ENCODE measurements at regions of chr3 and their contacts with region 1.

Region 1: DNA sequence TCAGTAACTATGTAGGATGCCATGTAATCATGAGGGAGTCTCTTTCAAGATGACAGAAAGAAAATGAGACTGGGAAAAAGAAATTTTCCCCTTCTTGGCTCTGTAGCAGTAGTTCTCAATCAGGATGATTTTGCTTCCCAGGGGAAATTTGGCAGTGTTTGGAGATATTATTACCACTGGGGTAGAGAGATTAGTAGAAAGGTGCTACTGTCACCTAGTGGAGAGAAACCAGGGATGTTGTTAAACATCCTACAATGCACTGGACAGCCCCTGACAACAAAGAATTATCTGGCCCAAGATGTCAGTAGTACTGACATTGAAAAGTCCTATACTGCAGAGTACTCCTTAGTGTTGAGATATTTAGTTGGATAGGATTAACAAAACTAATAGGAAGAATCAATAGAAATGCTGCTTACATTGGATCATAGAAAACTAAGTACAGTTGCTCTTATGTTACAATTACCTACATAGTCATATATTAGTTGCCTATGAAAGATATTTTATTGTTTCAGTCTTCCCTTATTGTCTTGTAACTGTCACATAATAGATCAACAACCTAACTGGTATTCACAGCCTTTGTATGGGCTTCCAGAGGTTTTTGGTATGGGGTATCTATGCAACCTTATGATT is 433.3 kb downstream of the RAP2B start:
- DNase-seq: peak in 1 of 2 experiments; percentile 33
- H3K4me3 ChIP-seq: no peak overlapping the region
- H3K4me3 Mint-ChIP-seq: no peak overlapping the region
- H3K27ac Mint-ChIP-seq: no peak overlapping the region
- H3K4me1 ChIP-seq: 0 out of 2 replicates have a peak, but pooled peaks cover 6% of the 10 kb centered on the region
- H3K4me1 Mint-ChIP-seq: no peaks in the 10 kb centered on the region
- H3K27me3 ChIP-seq: no peaks in the 10 kb centered on the region
- H3K27me3 Mint-ChIP-seq: no peaks in the 10 kb centered on the region
- CTCF ChIP-seq: peak; percentile 55 to 69

Region 2: GRCh38 chr3:153043729-153044328 is 551.5 kb before region 1 on chr3:
- CTCF ChIA-PET with region 1: interaction called, 7 read pairs
- POLR2A ChIA-PET with region 1: no interaction called
- intact Hi-C with region 1: loop called (anchors 1 kb)
- DNase-seq: no peak
- H3K4me3 ChIP-seq: no peak overlapping the region
- H3K4me3 Mint-ChIP-seq: peak overlapping the region; percentile 39
- H3K27ac Mint-ChIP-seq: peak overlapping the region; percentile 34
- H3K4me1 ChIP-seq: no peaks in the 10 kb centered on the region
- H3K4me1 Mint-ChIP-seq: peaks cover 6% of the 10 kb centered on the region
- H3K27me3 ChIP-seq: no peaks in the 10 kb centered on the region
- H3K27me3 Mint-ChIP-seq: no peaks in the 10 kb centered on the region
- CTCF ChIP-seq: no peak

Region 3: GRCh38 chr3:153291056-153291685 is 304.1 kb before region 1 on chr3:
- CTCF ChIA-PET with region 1: no interaction called
- POLR2A ChIA-PET with region 1: no interaction called
- intact Hi-C with region 1: loop called (anchors 1 kb)
- DNase-seq: peak in 1 of 2 experiments; percentile 29
- H3K4me3 ChIP-seq: no peak overlapping the region
- H3K4me3 Mint-ChIP-seq: no peak overlapping the region
- H3K27ac Mint-ChIP-seq: no peak overlapping the region
- H3K4me1 ChIP-seq: no peaks in the 10 kb centered on the region
- H3K4me1 Mint-ChIP-seq: no peaks in the 10 kb centered on the region
- H3K27me3 ChIP-seq: no peaks in the 10 kb centered on the region
- H3K27me3 Mint-ChIP-seq: no peaks in the 10 kb centered on the region
- CTCF ChIP-seq: peak; percentile 51 to 63

Region 4: GRCh38 chr3:153513236-153513635 is 82.1 kb before region 1 on chr3:
- CTCF ChIA-PET with region 1: no interaction called
- POLR2A ChIA-PET with region 1: no interaction called
- intact Hi-C with region 1: loop called (anchors 10 kb)
- DNase-seq: peak in 1 of 2 experiments; percentile 9
- H3K4me3 ChIP-seq: no peak overlapping the region
- H3K4me3 Mint-ChIP-seq: no peak overlapping the region
- H3K27ac Mint-ChIP-seq: no peak overlapping the region
- H3K4me1 ChIP-seq: no peaks in the 10 kb centered on the region
- H3K4me1 Mint-ChIP-seq: no peaks in the 10 kb centered on the region
- H3K27me3 ChIP-seq: no peaks in the 10 kb centered on the region
- H3K27me3 Mint-ChIP-seq: no peaks in the 10 kb centered on the region
- CTCF ChIP-seq: peak; percentile 28 to 31